GM12878 (cell line): ENCODE measurements at regions of chr14 and their contacts with region 1.

Region 1: DNA sequence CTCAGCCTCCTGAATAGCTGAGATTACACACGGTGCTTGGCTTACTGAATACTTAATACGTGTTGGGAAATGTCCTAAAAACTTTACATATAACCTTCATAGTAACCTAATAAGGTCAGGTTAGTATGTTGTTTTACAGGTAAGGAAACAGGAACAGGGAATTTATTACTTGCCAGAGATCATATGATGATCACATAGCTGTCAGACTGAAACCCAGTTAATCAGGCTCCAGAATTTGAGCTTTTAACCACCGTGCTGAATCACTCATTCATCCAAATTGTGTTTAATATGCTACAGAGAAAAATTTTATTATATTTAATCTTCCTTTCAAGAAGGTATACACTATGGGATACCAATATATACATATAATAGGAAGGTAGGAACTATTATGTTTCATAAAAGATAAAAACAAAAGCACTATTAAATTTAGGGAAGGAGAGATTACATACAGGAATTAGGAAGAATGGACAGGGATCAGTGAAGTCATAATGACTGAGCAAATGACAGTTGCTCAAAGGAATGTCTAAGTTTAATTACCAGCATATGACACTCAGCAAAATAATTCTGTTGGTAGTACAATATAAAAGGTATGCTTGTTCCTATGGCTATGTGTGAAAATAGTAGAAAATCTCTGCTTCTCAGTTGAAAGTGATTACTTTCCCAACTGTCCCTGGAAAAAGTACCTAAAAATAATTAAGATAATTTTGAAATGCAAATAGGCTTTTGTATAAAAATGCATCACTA is 59.3 kb downstream of the HEATR5A start:
- DNase-seq: no peak
- ATAC-seq: no peak
- H3K4me3 ChIP-seq: no peak overlapping the region
- H3K27ac ChIP-seq: no peak overlapping the region
- H3K4me1 ChIP-seq: no peaks in the 10 kb centered on the region; the same call in 1 of the 2 replicates
- H3K27me3 ChIP-seq: no peaks in the 10 kb centered on the region
- CTCF ChIP-seq: no peak
- EP300 ChIP-seq: no peak
- POLR2A ChIP-seq: no peak
- RAD21 ChIP-seq: no peak

Region 2: DNA sequence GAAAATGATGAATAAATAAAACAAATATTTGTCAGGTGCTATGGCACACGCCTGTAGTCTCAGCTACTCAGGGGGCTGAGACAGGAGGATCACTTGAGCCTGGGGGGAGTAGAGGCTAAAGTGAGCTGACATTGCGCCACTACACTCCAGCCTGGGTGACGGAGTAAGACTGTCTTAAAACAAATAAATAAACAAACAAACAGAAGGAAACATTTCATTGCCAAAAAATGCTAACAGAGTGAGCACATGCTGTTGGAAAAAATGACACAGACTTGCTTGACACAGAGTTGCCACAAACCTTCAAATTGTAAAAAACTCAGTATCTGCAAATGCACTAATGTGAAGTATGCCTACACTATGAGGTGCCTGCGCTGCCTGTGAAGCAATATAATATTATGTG is 386.5 kb before region 1 on chr14:
- CTCF ChIA-PET with region 1: no interaction called
- POLR2A ChIA-PET with region 1: no interaction called
- RAD21 ChIA-PET with region 1: interaction called, 3 read pairs
- SMC1A ChIA-PET with region 1: interaction called, 3 read pairs
- in situ Hi-C with region 1: no loop called
- intact Hi-C with region 1: loop called (anchors 10 kb)
- DNase-seq: no peak
- ATAC-seq: no peak
- H3K4me3 ChIP-seq: no peak overlapping the region
- H3K27ac ChIP-seq: no peak overlapping the region
- H3K4me1 ChIP-seq: no peaks in the 10 kb centered on the region
- H3K27me3 ChIP-seq: no peaks in the 10 kb centered on the region
- CTCF ChIP-seq: no peak
- EP300 ChIP-seq: no peak
- POLR2A ChIP-seq: no peak
- RAD21 ChIP-seq: no peak

Region 3: GRCh38 chr14:31159682-31160296 is 201.3 kb before region 1 on chr14:
- CTCF ChIA-PET with region 1: no interaction called
- POLR2A ChIA-PET with region 1: no interaction called
- RAD21 ChIA-PET with region 1: no interaction called
- SMC1A ChIA-PET with region 1: interaction called, 3 read pairs
- in situ Hi-C with region 1: no loop called
- intact Hi-C with region 1: loop called (anchors 10 kb)
- DNase-seq: no peak
- ATAC-seq: no peak
- H3K4me3 ChIP-seq: no peak overlapping the region
- H3K27ac ChIP-seq: no peak overlapping the region
- H3K4me1 ChIP-seq: no peaks in the 10 kb centered on the region
- H3K27me3 ChIP-seq: no peaks in the 10 kb centered on the region
- CTCF ChIP-seq: no peak
- EP300 ChIP-seq: no peak
- POLR2A ChIP-seq: no peak
- RAD21 ChIP-seq: no peak

Region 4: DNA sequence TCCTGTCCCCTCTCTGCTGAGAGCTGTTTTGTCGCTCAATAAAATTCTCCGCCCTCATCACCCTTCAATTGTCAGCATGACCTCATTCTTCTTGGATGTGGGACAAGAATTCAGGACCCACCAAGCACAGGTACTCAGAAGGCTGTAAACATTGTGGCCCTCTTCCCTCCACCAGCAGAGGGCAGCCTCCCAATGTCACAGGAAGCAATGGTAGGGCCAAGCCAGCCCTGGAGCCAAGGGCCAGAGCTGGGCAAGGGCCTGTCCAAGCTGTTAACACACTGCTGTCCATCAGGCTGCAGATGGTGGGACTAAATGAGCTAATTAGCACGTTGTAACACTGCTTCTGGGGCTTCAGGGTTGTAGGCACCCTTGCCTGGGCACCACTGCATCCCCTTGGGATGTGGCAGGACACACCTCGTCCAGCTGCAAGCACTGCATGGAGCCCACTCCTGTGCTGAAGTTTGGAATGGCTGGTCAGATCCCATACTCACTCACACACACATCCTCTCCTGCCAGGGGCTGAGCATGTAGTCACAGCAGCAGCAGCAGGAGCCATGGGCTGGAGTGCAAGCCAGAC is 90.8 kb before region 1 on chr14:
- CTCF ChIA-PET with region 1: no interaction called
- POLR2A ChIA-PET with region 1: no interaction called
- RAD21 ChIA-PET with region 1: no interaction called
- SMC1A ChIA-PET with region 1: no interaction called
- in situ Hi-C with region 1: no loop called
- intact Hi-C with region 1: loop called (anchors 1 kb)
- DNase-seq: no peak
- ATAC-seq: peak; percentile 85
- H3K4me3 ChIP-seq: no peak overlapping the region
- H3K27ac ChIP-seq: no peak overlapping the region
- H3K4me1 ChIP-seq: peaks cover 6% of the 10 kb centered on the region; the same call in 1 of the 2 replicates
- H3K27me3 ChIP-seq: no peaks in the 10 kb centered on the region
- CTCF ChIP-seq: peak; percentile 34 to 62 (median 52)
- EP300 ChIP-seq: no peak
- POLR2A ChIP-seq: no peak
- RAD21 ChIP-seq: peak; percentile 50

Region 5: GRCh38 chr14:31449971-31450610 is 89.0 kb after region 1 on chr14:
- CTCF ChIA-PET with region 1: interaction called, 10 read pairs
- POLR2A ChIA-PET with region 1: no interaction called
- RAD21 ChIA-PET with region 1: interaction called, 3 read pairs
- SMC1A ChIA-PET with region 1: no interaction called
- in situ Hi-C with region 1: no loop called
- intact Hi-C with region 1: no loop called
- DNase-seq: no peak
- ATAC-seq: peak; percentile 84
- H3K4me3 ChIP-seq: no peak overlapping the region
- H3K27ac ChIP-seq: no peak overlapping the region
- H3K4me1 ChIP-seq: no peaks in the 10 kb centered on the region
- H3K27me3 ChIP-seq: no peaks in the 10 kb centered on the region
- CTCF ChIP-seq: peak; percentile 48 to 53 (median 50); a peak in 4 of 6 replicates
- EP300 ChIP-seq: no peak
- POLR2A ChIP-seq: no peak
- RAD21 ChIP-seq: peak; percentile 53